ENCODE measurements at regions of chr15 and their contacts with region 1.

Region 1: DNA sequence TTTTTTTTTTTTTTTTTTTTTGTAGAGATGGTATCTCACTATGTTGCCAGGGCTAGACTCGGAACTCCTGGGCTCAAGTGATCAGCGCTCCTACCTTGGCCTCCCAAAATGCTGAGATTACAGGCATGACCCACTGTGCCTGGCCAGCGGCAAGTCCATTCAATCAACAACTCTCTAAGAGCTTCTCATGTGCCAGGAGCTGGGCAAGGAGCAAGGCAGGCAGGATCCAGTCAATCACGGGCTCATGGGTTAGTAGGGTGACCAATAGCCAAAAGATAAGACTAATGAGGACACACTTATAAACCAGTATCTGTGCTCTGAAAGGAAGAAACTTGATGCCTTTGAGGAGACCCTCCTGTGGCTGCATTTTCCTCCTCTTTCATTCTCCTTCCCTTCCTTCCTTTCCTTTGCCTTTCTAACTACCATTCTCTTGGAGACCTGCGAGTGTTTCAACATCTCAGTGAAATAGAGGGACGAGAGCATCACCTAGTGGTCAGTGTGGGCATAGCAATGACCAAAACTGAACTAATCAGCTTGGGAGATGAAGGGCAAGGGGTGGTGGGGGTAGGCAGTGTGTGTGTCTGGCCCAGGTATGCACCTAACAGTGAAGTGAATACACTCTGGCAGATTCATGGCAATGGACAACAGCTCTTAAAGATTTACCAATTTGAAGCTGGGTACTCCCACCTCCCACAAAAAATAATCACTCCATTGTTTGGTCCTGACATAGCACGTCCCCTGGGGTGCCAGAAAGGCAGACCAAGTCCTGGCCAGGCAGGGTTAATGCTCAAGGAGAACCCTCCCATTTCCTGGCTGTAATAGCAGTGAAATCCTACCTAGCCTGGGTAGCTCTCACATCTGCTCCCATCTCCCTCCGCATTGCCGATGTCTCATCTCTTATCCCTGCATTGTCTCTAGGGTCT is 6.2 kb downstream of the RPP25 start:
- DNase-seq: peak; percentile 65 to 84 (median 79)
- ATAC-seq: peak; percentile 99
- H3K4me3 ChIP-seq: no peak overlapping the region
- H3K4me3 Mint-ChIP-seq: no peak overlapping the region
- H3K27ac ChIP-seq: no peak overlapping the region
- H3K27ac Mint-ChIP-seq: no peak overlapping the region
- H3K4me1 ChIP-seq: no peaks in the 10 kb centered on the region
- H3K4me1 Mint-ChIP-seq: peaks cover 6% of the 10 kb centered on the region
- H3K27me3 ChIP-seq: peaks cover 0 to 2% of the 10 kb centered on the region in 2 experiments
- H3K27me3 Mint-ChIP-seq: no peaks in the 10 kb centered on the region
- CTCF ChIP-seq: peak; percentile 94

Region 2: GRCh38 chr15:74787251-74788041 is 162.9 kb before region 1 on chr15:
- CTCF ChIA-PET with region 1: interaction called, 17 read pairs
- POLR2A ChIA-PET with region 1: no interaction called
- intact Hi-C with region 1: no loop called
- DNase-seq: peak; percentile 81 to 97 (median 92)
- ATAC-seq: peak; percentile 71
- H3K4me3 ChIP-seq: peak overlapping the region; percentile 83 to 98
- H3K4me3 Mint-ChIP-seq: peak overlapping the region; percentile 83
- H3K27ac ChIP-seq: peak overlapping the region; percentile 53 to 90
- H3K27ac Mint-ChIP-seq: peak overlapping the region; percentile 92
- H3K4me1 ChIP-seq: peaks cover 76% of the 10 kb centered on the region
- H3K4me1 Mint-ChIP-seq: peaks cover 71% of the 10 kb centered on the region
- H3K27me3 ChIP-seq: no peaks in the 10 kb centered on the region
- H3K27me3 Mint-ChIP-seq: no peaks in the 10 kb centered on the region
- CTCF ChIP-seq: peak; percentile 62

Region 3: DNA sequence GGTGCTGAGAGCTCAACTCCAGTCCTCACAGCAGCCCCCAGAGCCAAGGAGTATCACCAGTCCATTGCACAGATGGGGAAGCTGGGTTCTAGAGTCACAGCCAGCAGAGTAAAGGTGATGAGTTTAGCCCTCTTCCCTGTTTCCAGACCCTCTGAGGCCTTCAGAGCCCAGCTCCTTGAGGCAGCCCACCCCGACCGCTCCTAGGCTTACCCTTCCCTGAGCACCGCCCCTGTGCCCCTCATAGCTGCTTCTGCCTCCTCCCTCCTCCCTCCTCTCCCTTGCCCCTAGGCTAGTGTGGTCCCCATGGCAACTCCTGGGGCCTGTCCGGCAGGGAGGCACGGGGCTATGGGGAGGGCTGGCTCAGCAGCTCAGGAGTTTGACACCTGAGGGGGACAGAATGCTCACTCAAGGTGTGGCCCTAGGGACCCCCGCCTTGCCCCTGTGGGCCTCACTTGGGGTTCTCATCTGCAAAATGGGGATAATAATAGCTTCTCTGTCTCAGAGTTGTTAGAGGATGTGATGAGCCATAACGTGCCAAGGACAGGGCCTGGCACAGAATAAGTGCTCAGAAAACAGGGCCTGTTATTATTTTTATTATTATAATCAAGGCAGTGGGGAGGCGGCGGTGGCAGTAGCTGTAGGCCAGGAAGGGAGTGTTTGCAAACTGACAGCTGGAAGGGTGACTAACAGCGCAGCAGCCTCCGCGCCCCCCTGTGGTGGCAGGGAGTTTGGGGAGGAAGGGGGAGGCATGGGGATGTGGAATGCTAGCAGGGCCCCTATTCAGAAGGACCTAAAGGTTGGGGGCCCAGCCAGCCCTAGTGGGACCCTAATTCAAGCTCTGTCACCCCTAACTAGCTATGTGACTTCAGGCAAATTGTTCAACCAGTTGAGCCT is 157.0 kb before region 1 on chr15:
- CTCF ChIA-PET with region 1: interaction called, 17 read pairs
- POLR2A ChIA-PET with region 1: interaction called, 3 read pairs
- intact Hi-C with region 1: no loop called
- DNase-seq: peak; percentile 60 to 88 (median 84)
- ATAC-seq: peak; percentile 51
- H3K4me3 ChIP-seq: peak overlapping the region; percentile 20 to 24
- H3K4me3 Mint-ChIP-seq: peak overlapping the region; percentile 69
- H3K27ac ChIP-seq: peak overlapping the region in 1 of 2 experiments; percentile 72
- H3K27ac Mint-ChIP-seq: peak overlapping the region; percentile 91
- H3K4me1 ChIP-seq: peaks cover 98% of the 10 kb centered on the region
- H3K4me1 Mint-ChIP-seq: peaks cover 89% of the 10 kb centered on the region
- H3K27me3 ChIP-seq: no peaks in the 10 kb centered on the region
- H3K27me3 Mint-ChIP-seq: no peaks in the 10 kb centered on the region
- CTCF ChIP-seq: peak; percentile 66

Region 4: GRCh38 chr15:74799856-74800547 is 150.3 kb before region 1 on chr15:
- CTCF ChIA-PET with region 1: interaction called, 21 read pairs
- POLR2A ChIA-PET with region 1: interaction called, 4 read pairs
- intact Hi-C with region 1: loop called (anchors 1 kb)
- DNase-seq: peak; percentile 74 to 94 (median 87)
- ATAC-seq: peak; percentile 95
- H3K4me3 ChIP-seq: no peak overlapping the region
- H3K4me3 Mint-ChIP-seq: peak overlapping the region; percentile 42
- H3K27ac ChIP-seq: peak overlapping the region; percentile 36 to 94
- H3K27ac Mint-ChIP-seq: peak overlapping the region; percentile 92
- H3K4me1 ChIP-seq: peaks cover 56% of the 10 kb centered on the region
- H3K4me1 Mint-ChIP-seq: peaks cover 56% of the 10 kb centered on the region
- H3K27me3 ChIP-seq: no peaks in the 10 kb centered on the region
- H3K27me3 Mint-ChIP-seq: no peaks in the 10 kb centered on the region
- CTCF ChIP-seq: peak; percentile 92

Region 5: DNA sequence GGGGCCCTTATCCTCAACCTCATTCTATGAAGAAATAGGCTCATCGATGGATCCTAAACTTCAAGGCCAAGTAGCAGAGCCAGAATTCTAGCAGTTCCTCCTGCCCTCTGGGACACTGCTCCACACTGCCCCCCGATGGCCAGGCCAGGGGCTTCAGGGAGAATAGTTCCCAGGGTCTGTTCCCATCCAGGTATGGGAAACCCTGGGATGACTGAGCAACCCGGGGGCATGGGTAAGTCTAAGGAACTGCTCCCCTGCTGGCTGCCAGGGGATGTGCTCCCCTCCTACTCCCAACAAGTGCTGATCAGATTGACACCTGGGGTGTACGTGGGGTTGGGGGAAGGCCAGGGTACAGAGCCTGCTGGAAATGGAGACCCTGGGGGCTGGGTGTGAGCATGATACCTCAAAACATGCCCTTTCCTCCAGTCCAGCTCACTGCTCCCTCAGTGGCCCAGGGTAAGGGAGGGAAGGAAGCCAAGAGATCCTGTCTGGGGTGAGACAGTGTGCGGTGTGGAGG is 115.0 kb before region 1 on chr15:
- CTCF ChIA-PET with region 1: interaction called, 23 read pairs
- POLR2A ChIA-PET with region 1: no interaction called
- intact Hi-C with region 1: loop called in 1 of 2 experiments (anchors 1 kb)
- DNase-seq: peak in 8 of 9 experiments; percentile 13 to 62 (median 44)
- ATAC-seq: peak; percentile 65
- H3K4me3 ChIP-seq: no peak overlapping the region
- H3K4me3 Mint-ChIP-seq: no peak overlapping the region
- H3K27ac ChIP-seq: no peak overlapping the region
- H3K27ac Mint-ChIP-seq: no peak overlapping the region
- H3K4me1 ChIP-seq: no peaks in the 10 kb centered on the region
- H3K4me1 Mint-ChIP-seq: no peaks in the 10 kb centered on the region
- H3K27me3 ChIP-seq: no peaks in the 10 kb centered on the region
- H3K27me3 Mint-ChIP-seq: peaks cover 2% of the 10 kb centered on the region
- CTCF ChIP-seq: peak; percentile 62